Heart right ventricle (tissue), 16 donors: ENCODE measurements at regions of chr9 and their contacts with region 1.

Region 1: GRCh38 chr9:88789785-88790184 is 201.5 kb upstream of the S1PR3 start:
- DNase-seq: no peak
- ATAC-seq: no peak
- H3K4me3 ChIP-seq: no peak overlapping the region
- H3K27ac ChIP-seq: no peak overlapping the region
- H3K4me1 ChIP-seq: peaks cover 0 to 28% (median 27%) of the 10 kb centered on the region in 9 donors
- H3K27me3 ChIP-seq: no peaks in the 10 kb centered on the region
- CTCF ChIP-seq: no peak

Region 2: DNA sequence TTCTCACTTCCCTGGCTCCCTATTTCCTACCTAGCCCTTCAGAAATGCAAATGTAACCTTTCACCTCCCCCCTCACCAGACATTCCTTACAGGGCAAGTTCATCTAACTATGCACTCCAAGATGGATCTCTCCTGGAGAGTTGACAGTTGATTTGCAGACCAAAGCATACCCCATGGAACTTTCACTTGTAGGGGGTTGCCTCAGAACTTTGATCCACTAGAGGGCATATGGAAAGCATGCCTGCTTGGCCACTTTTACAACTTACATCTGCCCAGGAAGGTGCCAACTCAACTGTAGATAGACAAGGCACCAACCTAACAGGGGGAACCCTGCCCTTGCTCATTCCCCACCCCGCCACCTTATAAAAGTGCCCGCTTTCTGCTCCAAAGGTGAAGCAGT is 67.0 kb before region 1 on chr9:
- intact Hi-C with region 1: no loop called
- DNase-seq: no peak
- ATAC-seq: peak in 6 of 8 donors; percentile 37 to 75 (median 63)
- H3K4me3 ChIP-seq: no peak overlapping the region
- H3K27ac ChIP-seq: no peak overlapping the region
- H3K4me1 ChIP-seq: peaks cover 0 to 10% (median 6%) of the 10 kb centered on the region in 9 donors
- H3K27me3 ChIP-seq: peaks cover 0 to 7% (median 0%) of the 10 kb centered on the region in 7 donors
- CTCF ChIP-seq: peak in 8 of 9 donors; percentile 14 to 54 (median 46)

Region 3: GRCh38 chr9:88829276-88829675 is 39.5 kb after region 1 on chr9:
- intact Hi-C with region 1: loop called in 1 of 10 experiments (anchors 5 kb)
- DNase-seq: no peak
- ATAC-seq: no peak
- H3K4me3 ChIP-seq: no peak overlapping the region
- H3K27ac ChIP-seq: no peak overlapping the region
- H3K4me1 ChIP-seq: peaks cover 0 to 39% (median 17%) of the 10 kb centered on the region in 9 donors
- H3K27me3 ChIP-seq: peaks cover 0 to 99% (median 1%) of the 10 kb centered on the region in 7 donors
- CTCF ChIP-seq: no peak

Region 4: DNA sequence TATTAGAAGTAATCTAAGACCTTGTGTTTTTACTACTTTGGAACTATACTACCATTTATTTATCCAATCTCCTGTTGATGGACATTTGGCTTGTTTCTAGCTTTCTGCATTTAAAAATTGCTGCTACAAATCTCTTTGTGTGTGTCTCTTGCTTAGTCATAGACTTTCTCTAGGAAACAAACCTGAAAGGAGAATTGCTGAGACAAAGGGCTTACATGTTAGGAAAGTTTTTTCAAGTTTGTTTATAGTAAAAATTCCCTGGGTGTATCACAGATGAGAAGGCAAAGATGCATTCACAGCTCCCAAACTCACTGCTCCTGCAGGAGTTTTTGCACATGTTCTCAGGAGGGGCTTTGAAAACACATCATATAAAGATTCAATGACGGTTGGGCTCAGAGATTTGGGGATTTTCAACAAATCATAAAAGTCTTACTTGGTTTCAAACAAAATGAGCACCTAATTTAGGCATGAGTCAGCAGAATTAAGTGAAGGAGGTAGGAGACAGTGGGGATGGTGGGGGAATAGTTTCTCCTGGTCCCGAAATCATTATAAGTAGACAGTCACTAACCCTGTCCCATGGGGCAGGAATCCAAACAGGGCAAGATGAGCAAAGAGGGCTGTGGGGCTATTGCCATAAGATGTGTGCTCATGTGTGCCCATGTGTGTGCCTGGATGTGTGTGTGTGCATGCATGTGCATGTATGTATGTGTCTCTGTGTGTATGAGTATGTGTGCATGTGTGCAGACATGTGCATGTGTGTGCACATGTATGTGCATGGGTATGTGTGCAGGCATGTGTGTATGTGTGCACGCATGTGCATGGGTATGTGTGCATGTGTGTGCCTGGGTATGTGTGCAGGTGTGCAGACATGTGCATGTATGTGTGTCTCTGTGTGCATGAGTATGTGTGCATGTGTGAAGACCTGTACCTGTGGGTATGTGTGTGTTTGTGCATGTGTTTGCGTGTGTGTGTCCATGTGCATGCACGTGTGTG is 158.1 kb after region 1 on chr9:
- intact Hi-C with region 1: no loop called
- DNase-seq: no peak
- ATAC-seq: no peak
- H3K4me3 ChIP-seq: no peak overlapping the region
- H3K27ac ChIP-seq: no peak overlapping the region
- H3K4me1 ChIP-seq: peaks cover 5 to 40% (median 29%) of the 10 kb centered on the region in 9 donors
- H3K27me3 ChIP-seq: no peaks in the 10 kb centered on the region
- CTCF ChIP-seq: no peak